PC-9 (cell line): ENCODE measurements at regions of chr6 and their contacts with region 1.

Region 1: GRCh38 chr6:1286972-1287610 is 24.8 kb upstream of the FOXQ1 start:
- DNase-seq: peak; percentile 87 to 99
- H3K4me3 ChIP-seq: no peak overlapping the region
- H3K27ac ChIP-seq: peak overlapping the region; percentile 86
- H3K4me1 ChIP-seq: peaks cover 38% of the 10 kb centered on the region
- H3K27me3 ChIP-seq: no peaks in the 10 kb centered on the region
- CTCF ChIP-seq: no peak

Region 2: GRCh38 chr6:1200718-1201105 is 86.4 kb before region 1 on chr6:
- CTCF ChIA-PET with region 1: no interaction called
- POLR2A ChIA-PET with region 1: no interaction called
- intact Hi-C with region 1: loop called (anchors 5 kb)
- DNase-seq: peak in 1 of 2 experiments; percentile 27
- H3K4me3 ChIP-seq: no peak overlapping the region
- H3K27ac ChIP-seq: no peak overlapping the region
- H3K4me1 ChIP-seq: no peaks in the 10 kb centered on the region
- H3K27me3 ChIP-seq: no peaks in the 10 kb centered on the region
- CTCF ChIP-seq: no peak

Region 3: GRCh38 chr6:1250489-1251197 is 36.4 kb before region 1 on chr6:
- CTCF ChIA-PET with region 1: no interaction called
- POLR2A ChIA-PET with region 1: no interaction called
- intact Hi-C with region 1: loop called (anchors 5 kb)
- DNase-seq: peak in 1 of 2 experiments; percentile 48
- H3K4me3 ChIP-seq: peak overlapping the region; percentile 42; the same call in 1 of the 2 replicates
- H3K27ac ChIP-seq: peak overlapping the region; percentile 94
- H3K4me1 ChIP-seq: peaks cover 39% of the 10 kb centered on the region
- H3K27me3 ChIP-seq: no peaks in the 10 kb centered on the region
- CTCF ChIP-seq: no peak

Region 4: DNA sequence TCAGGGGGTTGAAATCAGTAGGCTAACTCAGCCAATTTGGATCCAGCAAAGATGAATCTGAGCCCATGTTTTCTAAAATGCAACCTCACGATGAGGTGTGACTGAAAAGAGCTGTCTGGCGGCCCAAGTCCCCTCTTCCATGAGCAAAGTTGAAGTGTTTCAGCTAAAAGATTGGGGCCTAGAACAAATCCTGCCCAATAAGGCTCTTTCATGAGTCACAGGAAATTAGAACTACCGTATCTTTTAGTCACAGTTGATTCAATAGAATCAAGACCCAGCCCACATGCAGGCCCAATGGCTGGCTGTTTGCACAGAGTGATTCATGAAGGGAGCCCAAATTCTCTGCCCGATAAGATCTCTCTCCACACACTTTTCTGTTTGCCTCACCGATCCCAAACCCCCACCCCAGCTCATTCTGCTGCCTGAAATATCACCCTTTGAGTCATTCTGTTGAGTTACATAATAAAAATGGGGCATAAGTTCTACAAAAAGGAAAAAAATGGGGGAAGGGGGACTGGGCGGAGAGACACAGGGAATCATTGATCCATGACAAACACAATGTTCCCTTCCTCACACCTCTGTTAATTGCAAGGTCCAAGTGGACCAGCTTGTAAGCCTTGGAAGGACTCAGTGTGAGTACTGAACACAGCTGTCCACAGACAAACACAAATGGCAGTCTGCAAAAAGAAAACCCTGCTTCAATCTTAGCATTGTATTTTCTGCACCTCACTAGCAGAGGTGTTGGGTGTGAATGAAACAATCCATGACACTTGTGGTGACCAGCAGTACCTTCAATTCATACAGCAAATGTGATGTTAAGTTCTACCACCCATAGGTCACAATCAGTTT is 38.6 kb after region 1 on chr6:
- CTCF ChIA-PET with region 1: no interaction called
- POLR2A ChIA-PET with region 1: no interaction called
- intact Hi-C with region 1: loop called (anchors 2 kb)
- DNase-seq: peak; percentile 91 to 98
- H3K4me3 ChIP-seq: peak overlapping the region; percentile 31; the same call in 1 of the 2 replicates
- H3K27ac ChIP-seq: peak overlapping the region; percentile 100
- H3K4me1 ChIP-seq: peaks cover 80% of the 10 kb centered on the region
- H3K27me3 ChIP-seq: no peaks in the 10 kb centered on the region
- CTCF ChIP-seq: no peak

Region 5: DNA sequence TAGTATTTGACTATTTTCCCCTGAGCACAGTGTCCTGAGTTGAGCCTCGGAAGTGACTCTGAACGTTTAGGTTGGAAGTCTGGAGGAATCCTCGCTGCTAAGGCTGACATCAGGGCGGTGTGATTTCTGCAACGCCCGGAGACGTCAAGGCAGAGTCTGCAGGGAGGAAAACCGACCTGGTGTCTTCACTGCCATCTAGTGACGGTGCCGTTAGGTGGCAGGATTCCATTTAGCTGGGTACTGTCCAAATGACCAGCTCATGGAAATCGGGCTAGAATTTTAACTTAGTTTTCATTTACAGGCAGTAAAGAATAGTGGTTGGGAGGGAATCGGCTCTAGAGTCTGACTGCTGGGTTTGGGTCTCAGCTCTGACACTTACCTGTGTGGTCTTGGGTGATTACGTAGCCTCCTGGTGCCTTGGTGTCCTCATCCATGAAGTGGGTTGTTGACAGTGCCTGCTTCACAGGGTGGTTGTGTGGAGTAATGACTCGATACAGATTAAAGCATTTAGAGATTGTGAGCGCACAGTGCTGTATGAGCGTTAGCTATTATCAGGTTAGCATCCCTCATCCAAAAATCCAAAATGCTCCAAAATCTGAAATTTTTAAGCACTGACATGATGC is 137.3 kb after region 1 on chr6:
- CTCF ChIA-PET with region 1: no interaction called
- POLR2A ChIA-PET with region 1: no interaction called
- intact Hi-C with region 1: no loop called
- DNase-seq: peak in 1 of 2 experiments; percentile 45
- H3K4me3 ChIP-seq: no peak overlapping the region
- H3K27ac ChIP-seq: no peak overlapping the region
- H3K4me1 ChIP-seq: no peaks in the 10 kb centered on the region
- H3K27me3 ChIP-seq: 0 out of 2 replicates have a peak, but pooled peaks cover 8% of the 10 kb centered on the region
- CTCF ChIP-seq: peak; percentile 68

Region 6: DNA sequence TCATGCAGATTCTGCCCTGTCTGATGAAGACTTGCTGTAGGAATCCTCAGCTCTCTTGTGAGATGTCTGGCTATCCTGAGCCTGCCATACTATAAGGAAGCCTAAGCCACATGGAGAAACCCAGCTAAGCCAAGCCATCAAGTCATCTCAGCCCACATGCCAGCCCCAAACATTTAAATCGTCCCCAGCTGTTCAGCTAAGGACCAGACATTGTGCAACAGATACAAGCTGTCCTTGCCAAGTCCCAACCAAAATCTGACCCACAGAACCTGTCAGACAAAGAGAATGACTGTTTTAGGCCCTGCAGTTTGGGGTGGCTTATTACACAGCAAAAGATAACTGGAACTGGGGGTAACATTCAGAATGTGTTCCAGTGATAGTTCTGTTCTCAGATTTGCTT is 285.8 kb after region 1 on chr6:
- CTCF ChIA-PET with region 1: no interaction called
- POLR2A ChIA-PET with region 1: no interaction called
- intact Hi-C with region 1: no loop called
- DNase-seq: no peak
- H3K4me3 ChIP-seq: no peak overlapping the region
- H3K27ac ChIP-seq: no peak overlapping the region
- H3K4me1 ChIP-seq: no peaks in the 10 kb centered on the region
- H3K27me3 ChIP-seq: 0 out of 2 replicates have a peak, but pooled peaks cover 4% of the 10 kb centered on the region
- CTCF ChIP-seq: no peak